ENCODE measurements at regions of chr1 and their contacts with region 1.

Region 1: DNA sequence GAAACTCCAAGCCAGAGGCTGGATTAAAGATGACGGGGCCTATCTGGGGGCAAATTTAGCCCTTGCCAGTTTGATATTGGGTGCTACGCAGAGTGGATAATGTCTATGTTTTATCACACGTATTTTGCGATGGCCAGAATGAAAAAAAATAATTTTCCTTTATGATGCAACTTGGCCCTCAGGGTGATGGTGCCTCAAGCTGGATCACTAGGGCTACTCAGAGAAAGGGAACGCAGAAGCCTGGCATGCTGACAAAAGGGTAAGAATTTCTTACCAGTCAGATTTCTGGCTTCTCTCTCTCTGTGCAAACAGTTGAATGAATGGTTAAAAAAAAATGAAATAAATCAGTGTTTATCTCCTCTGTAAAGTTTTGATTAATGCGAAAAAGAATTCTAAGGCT is 32.6 kb upstream of the NEK2 start:
- DNase-seq: no peak
- ATAC-seq: no peak
- H3K4me3 Mint-ChIP-seq: no peak overlapping the region
- H3K27ac Mint-ChIP-seq: no peak overlapping the region
- H3K4me1 Mint-ChIP-seq: no peaks in the 10 kb centered on the region
- H3K27me3 Mint-ChIP-seq: no peaks in the 10 kb centered on the region

Region 2: GRCh38 chr1:211775170-211775569 is 67.2 kb after region 1 on chr1:
- CTCF ChIA-PET with region 1: no interaction called
- POLR2A ChIA-PET with region 1: no interaction called
- intact Hi-C with region 1: loop called in 1 of 2 experiments (anchors 2 kb)
- DNase-seq: no peak
- ATAC-seq: no peak
- H3K4me3 Mint-ChIP-seq: no peak overlapping the region
- H3K27ac Mint-ChIP-seq: no peak overlapping the region
- H3K4me1 Mint-ChIP-seq: no peaks in the 10 kb centered on the region
- H3K27me3 Mint-ChIP-seq: no peaks in the 10 kb centered on the region

Region 3: GRCh38 chr1:211885747-211886522 is 177.9 kb after region 1 on chr1:
- CTCF ChIA-PET with region 1: no interaction called
- POLR2A ChIA-PET with region 1: no interaction called
- intact Hi-C with region 1: no loop called
- DNase-seq: no peak
- ATAC-seq: no peak
- H3K4me3 Mint-ChIP-seq: no peak overlapping the region
- H3K27ac Mint-ChIP-seq: no peak overlapping the region
- H3K4me1 Mint-ChIP-seq: peaks cover 11% of the 10 kb centered on the region
- H3K27me3 Mint-ChIP-seq: peaks cover 9% of the 10 kb centered on the region